ENCODE measurements at regions of chr17 and their contacts with region 1.

Region 1: DNA sequence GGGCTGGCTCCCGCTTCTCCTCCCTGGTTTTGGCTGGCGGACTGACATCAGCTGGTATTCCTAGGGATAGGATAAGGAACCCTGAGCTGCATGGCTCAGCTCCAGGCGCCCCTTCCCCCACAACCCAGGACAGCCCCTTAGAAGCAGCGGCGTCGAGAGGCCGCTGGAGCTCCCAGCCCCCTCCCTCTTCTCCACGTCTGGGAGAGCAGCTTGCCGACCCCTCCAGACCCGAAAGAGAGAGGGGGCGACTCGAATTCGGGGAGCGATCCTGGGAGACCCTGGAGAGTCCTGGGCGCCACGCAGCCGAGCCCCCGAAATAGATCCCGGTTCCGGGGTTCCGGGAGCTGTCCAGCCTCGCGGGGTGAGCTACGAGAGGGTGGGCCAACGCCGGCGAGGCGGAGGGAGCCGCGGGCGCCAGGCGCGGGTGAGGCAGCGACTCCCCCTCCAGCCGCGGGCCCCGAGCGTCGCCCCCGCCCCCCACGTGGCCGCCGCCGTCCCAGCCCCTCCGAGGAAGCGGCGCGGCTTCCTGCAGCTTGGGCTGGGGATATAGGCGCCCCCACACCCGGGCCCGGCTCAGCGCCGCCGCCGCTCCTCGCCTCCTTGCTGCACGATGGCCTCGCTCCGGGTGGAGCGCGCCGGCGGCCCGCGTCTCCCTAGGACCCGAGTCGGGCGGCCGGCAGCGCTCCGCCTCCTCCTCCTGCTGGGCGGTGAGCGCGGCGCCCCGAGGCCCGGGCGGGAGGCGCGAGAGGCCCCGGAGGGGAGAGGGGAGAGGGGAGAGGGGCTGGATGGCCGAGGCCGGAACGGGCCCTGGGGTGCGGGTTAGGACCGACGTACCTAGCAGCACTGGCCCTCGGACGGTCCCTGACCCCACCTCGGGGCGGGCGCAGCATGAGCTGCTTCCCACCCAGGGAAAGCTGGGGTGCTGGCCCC is at the start of gene RAMP2:
- H3K4me3 Mint-ChIP-seq: peak within 1 kb of the TSS; percentile 52
- H3K27ac Mint-ChIP-seq: no peak within 1 kb of the TSS
- H3K4me1 Mint-ChIP-seq: peaks cover 37% of the 10 kb centered on the region
- H3K27me3 Mint-ChIP-seq: peaks cover 64% of the 10 kb centered on the region

Region 2: DNA sequence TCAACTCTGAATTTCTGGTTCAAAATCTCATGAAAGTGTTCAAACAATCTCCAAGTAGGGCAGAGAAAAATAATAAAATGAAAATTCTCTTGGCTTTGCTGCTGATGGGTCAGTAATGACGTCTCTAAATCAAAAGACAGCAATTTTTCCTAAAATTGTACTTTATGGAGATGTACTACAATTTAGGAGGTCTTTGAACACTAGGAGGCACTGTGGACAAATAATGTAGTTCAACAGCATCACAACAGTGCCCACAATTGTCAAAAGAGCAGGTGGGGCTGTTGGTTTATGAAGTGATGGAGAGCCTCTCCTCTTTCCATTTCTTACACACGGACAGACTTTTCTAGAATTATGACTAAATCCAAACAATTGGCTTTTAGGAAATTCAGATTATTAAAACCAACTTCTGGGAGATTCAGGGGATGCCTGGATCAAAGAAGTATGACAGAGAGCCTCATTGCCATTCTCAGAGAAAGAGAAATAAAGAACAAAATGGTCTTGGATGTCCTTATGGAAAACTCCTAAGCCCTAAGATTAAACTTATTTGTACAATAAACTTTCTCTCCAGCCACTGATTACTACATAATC is 39.8 kb before region 1 on chr17:
- intact Hi-C with region 1: loop called (anchors 1 kb)
- H3K4me3 Mint-ChIP-seq: no peak overlapping the region
- H3K27ac Mint-ChIP-seq: no peak overlapping the region
- H3K4me1 Mint-ChIP-seq: no peaks in the 10 kb centered on the region
- H3K27me3 Mint-ChIP-seq: no peaks in the 10 kb centered on the region

Region 3: DNA sequence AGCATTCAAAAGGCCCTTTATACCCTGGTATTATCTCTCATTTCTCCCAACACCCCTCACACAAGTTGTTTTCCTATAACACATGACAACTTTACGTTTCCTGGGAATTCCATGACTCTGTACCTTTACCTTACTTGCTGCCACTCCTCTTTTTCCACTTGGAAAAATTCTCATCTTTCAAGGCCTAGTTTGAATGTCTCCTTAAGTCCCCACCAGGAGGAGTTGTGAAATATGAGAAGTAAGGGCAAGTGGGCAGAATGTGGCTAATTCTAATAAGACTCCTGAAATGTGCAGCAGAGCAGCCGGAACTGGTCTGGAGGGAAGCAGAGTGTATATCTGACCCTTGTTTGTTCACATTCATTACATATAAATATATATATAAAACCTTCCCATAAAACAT is 324.6 kb after region 1 on chr17:
- intact Hi-C with region 1: no loop called
- H3K4me3 Mint-ChIP-seq: no peak overlapping the region
- H3K27ac Mint-ChIP-seq: no peak overlapping the region
- H3K4me1 Mint-ChIP-seq: no peaks in the 10 kb centered on the region
- H3K27me3 Mint-ChIP-seq: no peaks in the 10 kb centered on the region

Measured in dendritic cell treated with granulocyte-macrophage colony-stimulating factor and Interleukin-4, amounts not matched to agents 40 ng/mL and 50 ng/mL, for 4 days (primary cell).